H1 (cell line): ENCODE measurements at regions of chr11 and their contacts with region 1.

Region 1: GRCh38 chr11:14803846-14804245 is 88.2 kb downstream of the CYP2R1 start:
- DNase-seq: no peak
- H3K4me3 ChIP-seq: no peak overlapping the region
- H3K27ac ChIP-seq: no peak overlapping the region
- H3K4me1 ChIP-seq: no peaks in the 10 kb centered on the region
- H3K27me3 ChIP-seq: no peaks in the 10 kb centered on the region
- CTCF ChIP-seq: no peak
- EP300 ChIP-seq: no peak
- POLR2A ChIP-seq: no peak
- RAD21 ChIP-seq: no peak

Region 2: GRCh38 chr11:14789879-14790484 is 13.9 kb before region 1 on chr11:
- CTCF ChIA-PET with region 1: interaction called, 19 read pairs
- POLR2A ChIA-PET with region 1: interaction called, 3 read pairs
- DNase-seq: no peak
- H3K4me3 ChIP-seq: no peak overlapping the region
- H3K27ac ChIP-seq: no peak overlapping the region
- H3K4me1 ChIP-seq: no peaks in the 10 kb centered on the region
- H3K27me3 ChIP-seq: no peaks in the 10 kb centered on the region
- CTCF ChIP-seq: no peak; a peak in 1 of 4 replicates
- EP300 ChIP-seq: no peak
- POLR2A ChIP-seq: no peak
- RAD21 ChIP-seq: peak in 1 of 2 experiments; percentile 22; a peak in 1 of 4 replicates